Adrenal gland (tissue), 19 donors: ENCODE measurements at regions of chr15 and their contacts with region 1.

Region 1: DNA sequence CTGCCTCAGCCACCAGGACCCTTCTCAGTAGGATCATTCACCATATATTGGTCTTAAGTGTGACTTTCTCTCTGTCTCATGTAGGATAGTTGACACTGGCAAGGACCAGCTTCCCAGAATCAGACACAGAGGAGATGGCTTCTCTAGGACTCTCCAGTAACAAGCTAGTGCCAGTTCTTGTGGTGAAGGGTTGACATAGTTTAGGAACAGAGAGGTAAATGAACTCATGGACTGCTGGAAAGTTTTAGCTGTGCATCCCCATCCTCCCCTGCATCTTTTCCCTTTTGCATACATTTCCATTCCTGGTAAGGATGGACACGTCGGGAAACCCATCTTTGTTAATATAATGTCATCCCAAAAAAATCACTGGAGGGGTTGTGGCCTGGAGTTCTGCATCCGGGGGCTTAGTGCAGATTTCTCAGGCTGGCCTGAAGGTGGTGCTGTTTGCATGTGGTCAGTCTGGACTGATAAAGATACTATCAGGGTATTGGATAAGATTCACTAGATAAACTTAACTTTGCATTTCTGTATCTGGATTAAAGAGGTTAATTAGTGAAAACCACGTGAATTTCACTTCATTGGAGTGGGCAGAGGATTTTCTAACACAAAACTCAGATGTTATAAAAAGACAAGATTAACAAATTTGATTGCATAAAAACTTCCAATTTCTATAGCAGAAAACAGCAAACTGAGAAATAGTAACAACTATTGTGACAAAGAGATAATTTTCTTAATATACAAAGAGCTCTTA is 110.8 kb downstream of the TBC1D2B start:
- DNase-seq: peak in 5 of 7 donors; percentile 52 to 71 (median 61)
- H3K4me3 ChIP-seq: no peak overlapping the region
- H3K27ac ChIP-seq: no peak overlapping the region
- H3K4me1 ChIP-seq: no peaks in the 10 kb centered on the region
- H3K27me3 ChIP-seq: no peaks in the 10 kb centered on the region
- CTCF ChIP-seq: peak; percentile 70 to 89 (median 82)
- POLR2A ChIP-seq: no peak

Region 2: DNA sequence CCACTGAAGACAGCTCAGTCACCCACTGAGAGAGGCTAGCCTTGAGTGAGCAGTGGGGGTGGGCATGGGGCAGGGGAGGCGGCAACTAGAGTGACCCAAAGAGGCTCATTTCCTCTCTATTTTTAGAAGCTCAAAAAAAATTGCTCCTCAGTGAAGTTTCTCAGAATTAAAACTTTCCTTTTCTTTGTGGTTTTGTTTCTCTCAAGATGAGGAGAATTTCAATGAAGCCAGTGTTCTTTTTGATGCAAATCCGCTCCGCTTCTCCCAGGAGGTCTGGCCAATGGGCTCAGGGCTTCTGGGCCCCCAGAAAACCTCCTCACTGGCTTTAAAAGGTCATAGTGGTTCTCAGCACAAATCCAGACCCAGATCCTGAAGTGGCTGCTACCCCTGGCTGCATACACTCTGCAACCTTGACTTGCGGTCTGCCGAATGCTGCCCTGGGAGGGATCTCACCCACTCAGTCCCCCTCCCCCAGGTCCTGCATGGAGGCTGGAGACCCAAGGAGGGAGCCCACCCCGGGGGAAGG is 267.9 kb after region 1 on chr15 and contains the start of gene ACSBG1:
- intact Hi-C with region 1: loop called in 1 of 2 experiments (anchors 10 kb)
- DNase-seq: no peak
- H3K4me3 ChIP-seq: no peak within 1 kb of the TSS
- H3K27ac ChIP-seq: no peak within 1 kb of the TSS
- H3K4me1 ChIP-seq: peaks cover 5 to 7% of the 10 kb centered on the region in 2 donors
- H3K27me3 ChIP-seq: no peaks in the 10 kb centered on the region
- CTCF ChIP-seq: no peak
- POLR2A ChIP-seq: no peak
- total RNA-seq, gene ACSBG1: 1.9 to 42.3 (median 6.7) TPM